CD8-positive, alpha-beta T cell (primary cell): ENCODE measurements at regions of chr4 and their contacts with region 1.

Region 1: DNA sequence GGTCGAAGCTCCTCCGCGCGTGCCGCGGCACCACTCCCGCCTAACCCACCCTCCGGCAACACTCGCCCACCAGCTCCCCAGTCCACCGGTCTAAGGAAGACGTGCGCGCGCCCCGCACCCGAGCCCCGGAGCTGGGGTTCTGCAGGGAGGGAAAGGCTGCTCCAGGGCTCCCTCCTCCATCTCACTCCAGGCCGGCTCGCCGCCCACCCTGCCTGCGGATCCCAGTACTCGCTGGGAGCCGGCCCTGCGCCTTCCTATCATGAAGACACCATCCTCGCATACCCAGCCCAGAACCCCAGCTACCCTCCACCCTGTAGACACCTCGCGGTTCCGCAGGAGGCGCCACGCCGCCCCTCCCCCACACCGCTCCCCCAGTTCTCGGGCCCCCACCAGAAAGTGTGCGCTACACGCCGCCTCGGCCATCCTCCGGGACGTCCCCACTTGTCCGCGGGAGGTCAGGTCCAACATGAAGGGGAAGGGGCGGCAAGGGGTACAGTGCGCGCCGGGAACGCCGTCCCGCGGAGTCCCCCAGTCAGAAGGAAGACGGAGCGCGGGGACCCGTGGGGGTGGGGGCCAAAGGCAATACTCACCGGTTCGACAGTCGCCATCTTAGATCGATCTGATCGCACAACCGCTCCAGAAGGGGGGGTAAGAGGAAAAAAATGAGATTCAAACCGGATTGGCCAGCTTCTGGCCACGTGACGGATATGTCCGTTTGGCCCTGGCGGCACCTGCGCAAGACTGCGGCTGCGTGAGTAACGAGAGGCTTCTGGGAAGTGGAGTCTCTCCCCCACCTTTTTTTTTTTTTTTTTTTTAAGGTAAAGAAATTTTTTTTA is at the start of gene EIF4E:
- DNase-seq: peak; percentile 93 to 99 (median 94)
- ATAC-seq: peak; percentile 80
- H3K4me3 ChIP-seq: peak within 1 kb of the TSS; percentile 99 to 100
- H3K4me3 Mint-ChIP-seq: peak within 1 kb of the TSS; percentile 99
- H3K27ac ChIP-seq: peak within 1 kb of the TSS; percentile 89 to 94
- H3K27ac Mint-ChIP-seq: peak within 1 kb of the TSS; percentile 97
- H3K4me1 ChIP-seq: peaks cover 15% of the 10 kb centered on the region
- H3K4me1 Mint-ChIP-seq: peaks cover 46% of the 10 kb centered on the region
- H3K27me3 ChIP-seq: no peaks in the 10 kb centered on the region
- H3K27me3 Mint-ChIP-seq: no peaks in the 10 kb centered on the region
- CTCF ChIP-seq: peak; percentile 32
- total RNA-seq, gene EIF4E: 66.7 to 68.5 TPM

Region 2: DNA sequence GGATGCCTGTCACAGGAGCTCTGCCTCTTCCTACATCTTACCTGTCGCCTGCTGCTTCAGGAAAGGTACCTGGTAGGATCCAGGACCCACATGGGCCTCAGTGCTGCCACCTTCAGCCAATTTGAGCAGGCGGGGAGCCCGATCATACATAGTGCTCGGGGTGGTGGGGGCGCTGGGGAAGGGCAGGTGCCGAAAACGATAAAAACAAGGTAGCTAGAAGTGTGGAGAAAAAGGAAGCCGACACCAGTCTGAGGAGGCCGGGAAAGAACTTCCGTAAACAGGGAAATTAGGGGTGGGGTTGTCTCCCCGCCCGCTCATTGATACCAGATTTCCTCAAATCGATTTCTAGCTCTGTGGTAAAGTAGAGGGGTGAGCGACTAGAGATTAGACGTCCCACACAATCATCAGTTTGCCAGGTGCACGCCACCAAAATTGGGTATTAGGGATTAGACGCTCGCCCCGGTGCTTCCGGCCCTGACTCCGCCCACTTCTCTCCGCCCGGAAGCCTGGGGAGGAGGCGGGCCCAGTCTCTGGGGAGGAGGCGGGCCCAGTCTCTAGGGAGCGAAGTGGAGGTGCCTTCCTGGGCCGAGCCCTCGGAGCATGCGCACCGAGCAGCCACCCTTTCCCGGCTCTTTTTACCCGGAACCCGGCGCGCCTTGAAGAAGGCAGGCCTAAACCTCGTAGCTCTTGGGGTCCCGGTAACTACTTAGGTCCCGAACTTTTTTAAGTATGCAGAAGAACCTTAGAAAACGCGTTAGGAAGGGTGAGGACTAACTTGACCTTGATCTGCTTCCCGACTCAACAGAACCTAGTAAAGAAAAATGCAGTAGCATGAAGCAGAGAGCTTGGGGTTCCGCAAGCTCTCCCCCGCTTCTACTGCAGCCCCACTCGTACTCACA is 785.5 kb before region 1 on chr4 and contains the start of gene STPG2:
- CTCF ChIA-PET with region 1: interaction called, 8 read pairs
- POLR2A ChIA-PET with region 1: interaction called, 7 read pairs
- intact Hi-C with region 1: loop called (anchors 1 to 5 kb)
- DNase-seq: peak; percentile 87 to 96 (median 93)
- ATAC-seq: peak; percentile 99
- H3K4me3 ChIP-seq: peak within 1 kb of the TSS; percentile 69 to 70
- H3K4me3 Mint-ChIP-seq: peak within 1 kb of the TSS; percentile 94
- H3K27ac ChIP-seq: peak within 1 kb of the TSS; percentile 68 to 90
- H3K27ac Mint-ChIP-seq: peak within 1 kb of the TSS; percentile 96
- H3K4me1 ChIP-seq: peaks cover 7% of the 10 kb centered on the region
- H3K4me1 Mint-ChIP-seq: peaks cover 17% of the 10 kb centered on the region
- H3K27me3 ChIP-seq: peaks cover 0 to 2% of the 10 kb centered on the region in 2 experiments
- H3K27me3 Mint-ChIP-seq: no peaks in the 10 kb centered on the region
- CTCF ChIP-seq: peak; percentile 64
- total RNA-seq, gene STPG2: not detected

Region 3: DNA sequence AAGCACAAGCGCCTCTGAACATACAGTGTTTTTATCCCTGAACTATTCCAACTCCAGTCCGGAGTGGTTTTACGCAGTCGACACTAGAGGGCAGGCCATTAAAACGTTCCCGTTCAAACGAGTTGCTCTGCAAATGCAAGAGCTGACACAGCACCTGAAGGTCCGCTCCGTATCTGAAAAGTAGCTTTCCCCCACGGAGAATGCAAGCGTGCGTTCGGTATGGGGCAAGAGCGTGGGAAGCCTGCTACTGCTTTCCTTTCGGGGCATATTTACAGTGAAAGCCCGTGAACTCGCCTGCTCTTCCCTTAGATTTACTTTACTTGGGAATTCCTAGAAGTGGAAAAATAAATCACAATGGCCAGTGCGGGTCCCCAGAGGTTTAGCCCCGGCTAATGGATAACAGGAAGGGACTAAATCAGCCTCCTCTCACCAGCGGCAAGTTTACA is 461.1 kb before region 1 on chr4:
- CTCF ChIA-PET with region 1: interaction called, 5 read pairs
- POLR2A ChIA-PET with region 1: interaction called, 3 read pairs
- intact Hi-C with region 1: loop called in 1 of 2 experiments (anchors 1 kb)
- DNase-seq: peak; percentile 31 to 84 (median 67)
- ATAC-seq: peak; percentile 91
- H3K4me3 ChIP-seq: peak overlapping the region; percentile 32 to 43
- H3K4me3 Mint-ChIP-seq: peak overlapping the region; percentile 77
- H3K27ac ChIP-seq: no peak overlapping the region
- H3K27ac Mint-ChIP-seq: no peak overlapping the region
- H3K4me1 ChIP-seq: peaks cover 14% of the 10 kb centered on the region
- H3K4me1 Mint-ChIP-seq: peaks cover 28% of the 10 kb centered on the region
- H3K27me3 ChIP-seq: no peaks in the 10 kb centered on the region
- H3K27me3 Mint-ChIP-seq: no peaks in the 10 kb centered on the region
- CTCF ChIP-seq: peak; percentile 68

Region 4: GRCh38 chr4:98778206-98778605 is 150.5 kb before region 1 on chr4:
- CTCF ChIA-PET with region 1: no interaction called
- POLR2A ChIA-PET with region 1: no interaction called
- intact Hi-C with region 1: no loop called
- DNase-seq: no peak
- ATAC-seq: no peak
- H3K4me3 ChIP-seq: no peak overlapping the region
- H3K4me3 Mint-ChIP-seq: no peak overlapping the region
- H3K27ac ChIP-seq: no peak overlapping the region
- H3K27ac Mint-ChIP-seq: no peak overlapping the region
- H3K4me1 ChIP-seq: no peaks in the 10 kb centered on the region
- H3K4me1 Mint-ChIP-seq: no peaks in the 10 kb centered on the region
- H3K27me3 ChIP-seq: no peaks in the 10 kb centered on the region
- H3K27me3 Mint-ChIP-seq: no peaks in the 10 kb centered on the region
- CTCF ChIP-seq: no peak

Region 5: DNA sequence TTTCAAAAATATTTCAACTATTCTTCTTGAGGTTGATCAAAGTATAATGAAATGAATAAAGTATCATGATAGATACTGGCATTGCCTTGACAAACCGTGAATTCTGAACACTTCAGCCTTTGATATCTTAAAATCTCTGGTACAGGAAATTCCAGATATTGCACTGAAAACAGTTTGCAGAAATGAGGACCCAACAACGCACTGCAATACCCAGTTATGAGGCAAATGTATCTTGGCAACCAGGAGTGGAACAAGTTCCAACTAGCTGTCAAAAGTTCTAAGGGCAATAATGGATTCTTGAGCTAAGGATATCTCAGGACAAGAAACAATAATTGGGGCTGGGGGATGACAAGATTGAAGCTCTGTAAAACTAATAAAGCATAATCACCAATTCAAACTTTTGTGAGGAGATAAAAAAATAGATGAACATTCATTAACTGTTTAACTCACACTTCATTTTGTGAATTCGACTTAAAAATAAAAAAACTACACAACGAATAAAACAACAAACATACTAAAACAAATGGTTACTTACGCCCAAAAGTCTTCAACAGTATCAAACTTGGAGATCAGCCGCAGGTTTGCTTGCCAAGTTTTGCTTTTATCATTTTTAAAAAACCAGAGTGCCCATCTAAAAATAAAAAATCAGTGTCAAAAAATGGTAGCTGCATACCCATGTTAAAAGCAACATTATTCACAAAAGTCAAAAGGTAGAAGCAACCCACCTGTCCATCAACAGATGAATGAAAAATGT is 37.8 kb before region 1 on chr4:
- CTCF ChIA-PET with region 1: no interaction called
- POLR2A ChIA-PET with region 1: interaction called, 4 read pairs
- intact Hi-C with region 1: loop called in 1 of 2 experiments (anchors 5 kb)
- DNase-seq: no peak
- ATAC-seq: no peak
- H3K4me3 ChIP-seq: no peak overlapping the region
- H3K4me3 Mint-ChIP-seq: no peak overlapping the region
- H3K27ac ChIP-seq: no peak overlapping the region
- H3K27ac Mint-ChIP-seq: no peak overlapping the region
- H3K4me1 ChIP-seq: no peaks in the 10 kb centered on the region
- H3K4me1 Mint-ChIP-seq: peaks cover 42% of the 10 kb centered on the region
- H3K27me3 ChIP-seq: no peaks in the 10 kb centered on the region
- H3K27me3 Mint-ChIP-seq: no peaks in the 10 kb centered on the region
- CTCF ChIP-seq: no peak

Region 6: GRCh38 chr4:99088481-99089365 is 160.0 kb after region 1 on chr4 and contains the start of gene ADH5:
- CTCF ChIA-PET with region 1: no interaction called
- POLR2A ChIA-PET with region 1: interaction called, 16 read pairs
- intact Hi-C with region 1: loop called (anchors 1 to 2 kb)
- DNase-seq: peak; percentile 88 to 94 (median 93)
- ATAC-seq: peak; percentile 96
- H3K4me3 ChIP-seq: peak within 1 kb of the TSS; percentile 59 to 91
- H3K4me3 Mint-ChIP-seq: peak within 1 kb of the TSS; percentile 99
- H3K27ac ChIP-seq: peak within 1 kb of the TSS; percentile 76 to 86
- H3K27ac Mint-ChIP-seq: peak within 1 kb of the TSS; percentile 99
- H3K4me1 ChIP-seq: peaks cover 23% of the 10 kb centered on the region
- H3K4me1 Mint-ChIP-seq: peaks cover 58% of the 10 kb centered on the region
- H3K27me3 ChIP-seq: no peaks in the 10 kb centered on the region
- H3K27me3 Mint-ChIP-seq: no peaks in the 10 kb centered on the region
- CTCF ChIP-seq: no peak
- total RNA-seq, gene ADH5: 50.0 to 51.7 TPM

Region 7: DNA sequence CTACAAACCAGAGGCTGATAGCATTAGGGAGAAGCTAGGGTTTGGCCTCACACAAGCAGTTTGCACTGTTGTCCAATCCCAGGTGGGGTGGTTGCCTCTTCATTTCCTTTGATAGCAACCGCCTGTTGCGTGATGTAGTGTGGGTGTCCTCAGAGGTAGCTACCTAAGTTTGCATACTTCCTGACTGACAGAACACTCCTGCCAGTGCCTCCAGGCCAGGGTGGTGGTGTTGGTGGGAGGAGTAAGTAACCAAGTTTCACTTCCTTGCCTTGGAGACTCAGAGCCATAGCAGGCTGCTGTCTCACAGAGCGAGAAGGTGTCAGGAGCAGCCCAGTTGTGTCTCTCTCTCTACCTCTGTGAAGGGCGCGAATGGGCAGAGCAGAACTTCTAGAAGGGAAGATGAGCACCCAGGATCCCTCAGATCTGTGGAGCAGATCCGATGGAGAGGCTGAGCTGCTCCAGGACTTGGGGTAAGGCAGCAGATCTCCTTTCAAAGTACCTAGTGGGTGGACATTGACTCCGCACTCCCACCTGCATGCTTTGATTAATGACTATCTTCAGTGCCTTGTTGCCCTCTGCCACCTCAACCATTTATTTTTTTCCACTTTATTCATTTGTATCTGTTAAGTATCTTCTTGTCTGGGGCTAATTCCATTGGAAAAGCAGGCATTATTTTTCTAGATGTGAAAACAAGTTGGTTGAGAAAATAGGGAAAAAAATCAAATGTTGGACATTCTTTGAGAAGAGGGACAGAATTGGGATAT is 888.0 kb after region 1 on chr4 and contains the start of gene DAPP1:
- CTCF ChIA-PET with region 1: no interaction called
- POLR2A ChIA-PET with region 1: no interaction called
- intact Hi-C with region 1: loop called in 1 of 2 experiments (anchors 10 kb)
- DNase-seq: peak; percentile 48 to 91 (median 70)
- ATAC-seq: peak; percentile 97
- H3K4me3 ChIP-seq: peak within 1 kb of the TSS; percentile 36 to 49
- H3K4me3 Mint-ChIP-seq: peak within 1 kb of the TSS; percentile 85
- H3K27ac ChIP-seq: peak within 1 kb of the TSS; percentile 22 to 53
- H3K27ac Mint-ChIP-seq: peak within 1 kb of the TSS; percentile 89
- H3K4me1 ChIP-seq: peaks cover 38% of the 10 kb centered on the region
- H3K4me1 Mint-ChIP-seq: peaks cover 56% of the 10 kb centered on the region
- H3K27me3 ChIP-seq: no peaks in the 10 kb centered on the region
- H3K27me3 Mint-ChIP-seq: no peaks in the 10 kb centered on the region
- CTCF ChIP-seq: no peak
- total RNA-seq, gene DAPP1: 3.2 to 3.6 TPM

Region 8: DNA sequence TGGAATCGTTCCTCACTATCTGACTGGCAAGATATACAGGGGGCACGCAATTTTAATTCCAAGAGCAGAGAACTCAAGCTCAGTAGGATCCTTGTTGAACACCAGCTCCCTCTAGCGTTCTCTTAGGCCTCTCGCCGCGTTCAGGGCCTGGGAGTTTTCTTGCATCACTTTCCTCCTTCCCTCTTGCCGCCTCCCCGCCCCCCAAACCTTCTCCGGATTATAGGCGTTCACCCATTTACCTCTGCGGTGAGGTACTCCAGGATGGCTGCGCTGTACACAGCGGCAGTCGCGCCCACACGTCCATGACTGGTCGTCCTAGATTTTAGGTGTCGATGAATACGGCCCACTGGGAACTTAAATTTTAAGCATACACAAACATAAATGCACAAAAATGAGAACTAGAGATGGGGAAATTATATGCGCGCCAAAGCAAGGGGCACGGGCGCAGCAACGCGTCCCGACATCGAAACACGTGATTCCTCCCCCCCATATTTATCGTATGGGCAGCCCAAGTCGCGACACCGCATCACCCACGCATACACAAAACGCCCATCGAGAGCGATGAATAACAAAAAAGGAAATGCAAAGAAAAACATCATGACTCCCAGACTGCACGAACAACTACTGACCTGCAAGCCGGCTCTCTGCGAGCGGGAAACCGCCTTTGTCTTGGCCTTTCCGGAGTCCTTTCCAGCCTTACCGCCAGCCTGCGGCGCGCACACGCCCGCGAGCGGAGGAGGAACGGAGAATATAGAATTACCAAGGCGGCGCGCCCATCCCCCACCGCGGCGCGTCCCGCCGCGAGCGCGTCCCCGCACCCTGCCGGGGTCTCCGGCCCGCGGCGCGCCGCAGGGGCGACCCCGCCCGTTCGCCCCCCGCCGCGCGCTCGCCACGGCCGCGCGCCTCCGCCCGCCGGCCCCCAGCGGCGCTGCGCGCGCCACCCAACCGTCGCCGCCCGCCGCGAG is 1020.6 kb after region 1 on chr4:
- CTCF ChIA-PET with region 1: no interaction called
- POLR2A ChIA-PET with region 1: no interaction called
- intact Hi-C with region 1: loop called (anchors 1 to 2 kb)
- DNase-seq: peak; percentile 67 to 95 (median 88)
- ATAC-seq: peak; percentile 32
- H3K4me3 ChIP-seq: peak overlapping the region; percentile 89 to 97
- H3K4me3 Mint-ChIP-seq: no peak overlapping the region
- H3K27ac ChIP-seq: peak overlapping the region; percentile 85 to 97
- H3K27ac Mint-ChIP-seq: no peak overlapping the region
- H3K4me1 ChIP-seq: peaks cover 37% of the 10 kb centered on the region
- H3K4me1 Mint-ChIP-seq: peaks cover 35% of the 10 kb centered on the region
- H3K27me3 ChIP-seq: no peaks in the 10 kb centered on the region
- H3K27me3 Mint-ChIP-seq: no peaks in the 10 kb centered on the region
- CTCF ChIP-seq: peak; percentile 58